Activated CD8-positive, alpha-beta T cell treated with anti-CD3 and anti-CD28 coated beads for 36 hours (primary cell): ENCODE measurements at regions of chr9 and their contacts with region 1.

Region 1: DNA sequence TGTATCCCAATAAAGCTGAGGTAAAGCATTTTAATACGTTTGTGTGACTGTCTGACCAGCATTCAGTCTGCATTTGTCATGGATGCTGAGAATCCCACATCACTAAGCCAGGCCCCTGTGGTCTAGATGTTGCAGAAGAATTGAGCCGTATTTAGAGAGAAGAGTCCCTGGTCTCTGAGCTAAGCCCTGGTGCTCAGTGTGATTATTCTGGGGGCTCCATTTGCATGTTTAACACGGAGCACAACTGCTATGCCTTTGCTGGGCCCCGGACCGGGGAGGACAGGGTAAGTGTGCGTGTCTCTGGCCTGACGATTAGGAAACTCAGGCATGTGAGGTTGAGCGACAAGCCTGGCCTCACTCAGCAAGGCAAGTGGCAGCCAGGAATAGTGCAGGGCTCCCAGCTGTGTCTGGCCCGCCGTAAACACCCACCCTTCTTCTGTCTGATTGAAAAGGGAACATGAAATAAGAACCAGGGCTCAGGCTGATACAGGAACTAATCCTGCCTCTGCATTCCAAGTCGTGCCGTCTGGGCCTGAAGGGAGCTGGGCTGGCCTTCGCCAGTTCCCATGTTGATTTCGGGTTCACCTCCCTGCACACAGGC is 22.3 kb downstream of the FAM78A start:
- DNase-seq: no peak
- ATAC-seq: no peak
- H3K4me3 Mint-ChIP-seq: peak overlapping the region; percentile 30
- H3K27ac Mint-ChIP-seq: peak overlapping the region; percentile 90
- H3K4me1 Mint-ChIP-seq: peaks cover 51% of the 10 kb centered on the region
- H3K27me3 Mint-ChIP-seq: no peaks in the 10 kb centered on the region
- CTCF ChIP-seq: no peak

Region 2: DNA sequence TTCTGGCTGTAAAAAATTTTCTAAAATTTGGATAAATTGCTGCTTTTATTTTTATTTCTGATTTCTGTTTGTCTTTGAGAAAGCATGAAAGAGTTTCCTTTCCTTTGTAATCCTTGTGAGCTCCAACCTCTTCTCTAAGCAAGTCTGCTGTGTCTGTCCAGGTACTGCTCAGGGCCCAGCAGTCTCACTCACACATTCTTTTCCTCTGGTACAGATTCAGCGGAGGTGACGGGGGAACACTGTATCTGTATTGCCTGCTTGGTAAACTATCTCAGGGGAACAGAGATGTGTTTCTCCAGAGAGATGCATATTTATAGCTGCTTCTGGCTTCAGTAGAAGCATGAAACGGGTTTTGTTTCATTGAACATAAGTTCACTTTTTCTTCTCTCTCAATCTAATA is 68.1 kb before region 1 on chr9:
- CTCF ChIA-PET with region 1: no interaction called
- POLR2A ChIA-PET with region 1: no interaction called
- intact Hi-C with region 1: no loop called
- DNase-seq: no peak
- ATAC-seq: no peak
- H3K4me3 Mint-ChIP-seq: no peak overlapping the region
- H3K27ac Mint-ChIP-seq: no peak overlapping the region
- H3K4me1 Mint-ChIP-seq: no peaks in the 10 kb centered on the region
- H3K27me3 Mint-ChIP-seq: no peaks in the 10 kb centered on the region
- CTCF ChIP-seq: no peak

Region 3: DNA sequence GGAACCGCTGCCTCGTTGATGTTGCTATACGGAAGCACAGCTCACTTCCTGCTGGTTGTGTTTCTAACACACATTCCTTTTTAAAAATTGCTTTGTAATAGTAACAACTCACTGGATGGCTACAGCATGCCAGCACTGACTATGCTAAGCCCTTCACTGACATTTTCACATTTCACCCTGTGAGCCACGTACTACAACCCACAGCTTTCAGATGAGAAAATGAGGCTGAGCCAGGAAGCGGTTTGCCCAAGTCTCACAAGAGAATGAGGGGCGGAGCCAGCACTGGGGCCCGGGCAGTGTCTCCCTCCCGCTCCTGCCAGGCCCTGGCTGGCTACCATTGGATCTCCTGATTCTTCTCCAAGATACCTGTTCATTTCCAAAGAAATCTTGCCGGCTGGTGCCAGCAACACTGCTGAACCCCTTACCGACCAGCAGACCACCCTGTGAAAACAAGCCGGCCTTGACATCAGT is 16.0 kb before region 1 on chr9:
- CTCF ChIA-PET with region 1: interaction called, 6 read pairs
- POLR2A ChIA-PET with region 1: interaction called, 74 read pairs
- intact Hi-C with region 1: no loop called
- DNase-seq: peak; percentile 96
- ATAC-seq: peak; percentile 95
- H3K4me3 Mint-ChIP-seq: peak overlapping the region; percentile 73
- H3K27ac Mint-ChIP-seq: peak overlapping the region; percentile 98
- H3K4me1 Mint-ChIP-seq: peaks cover 39% of the 10 kb centered on the region
- H3K27me3 Mint-ChIP-seq: no peaks in the 10 kb centered on the region
- CTCF ChIP-seq: no peak

Region 4: DNA sequence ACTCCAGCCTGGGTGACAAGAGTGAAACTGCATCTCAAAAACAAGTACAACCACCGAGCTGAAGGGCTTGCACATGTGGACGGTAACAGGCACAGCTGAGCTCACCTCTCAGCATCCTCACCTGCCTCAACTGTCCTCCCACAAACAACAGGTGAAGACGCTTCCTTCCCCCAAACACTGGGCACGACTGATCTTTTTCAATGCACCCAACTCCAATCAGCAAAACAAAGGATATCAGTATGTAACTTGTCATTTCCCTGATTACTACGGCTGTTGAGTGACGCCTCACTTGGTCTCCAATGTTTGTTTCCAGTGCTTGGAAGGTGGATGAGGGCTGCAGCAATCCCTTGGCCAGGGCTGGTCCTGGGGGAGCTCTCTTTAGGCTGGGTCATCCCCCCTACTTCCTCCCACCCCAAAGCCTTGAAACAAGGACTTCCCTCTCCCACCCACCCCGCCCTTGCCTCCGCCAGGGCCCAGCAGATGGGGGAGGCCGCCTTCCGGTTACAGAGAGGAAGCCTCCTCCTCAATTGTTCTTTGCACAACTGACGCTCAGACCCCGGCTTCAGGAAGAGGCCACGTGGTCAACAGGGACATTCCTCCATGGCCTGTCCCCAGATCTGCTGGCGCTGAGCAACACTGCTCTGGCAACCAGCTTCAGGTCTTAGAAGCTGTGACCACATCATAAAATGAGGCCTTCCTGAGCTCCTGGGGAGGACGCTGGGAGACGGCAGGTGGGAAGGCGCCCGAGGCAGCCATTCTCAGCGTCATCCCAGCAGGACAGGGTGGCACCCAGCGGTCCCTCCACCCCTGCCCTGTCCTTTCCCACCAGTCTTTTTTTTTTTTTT is 16.4 kb after region 1 on chr9:
- CTCF ChIA-PET with region 1: interaction called, 29 read pairs
- POLR2A ChIA-PET with region 1: interaction called, 310 read pairs
- intact Hi-C with region 1: no loop called
- DNase-seq: peak; percentile 77
- ATAC-seq: peak; percentile 18
- H3K4me3 Mint-ChIP-seq: peak overlapping the region; percentile 90
- H3K27ac Mint-ChIP-seq: peak overlapping the region; percentile 99
- H3K4me1 Mint-ChIP-seq: peaks cover 44% of the 10 kb centered on the region
- H3K27me3 Mint-ChIP-seq: no peaks in the 10 kb centered on the region
- CTCF ChIP-seq: no peak

Region 5: DNA sequence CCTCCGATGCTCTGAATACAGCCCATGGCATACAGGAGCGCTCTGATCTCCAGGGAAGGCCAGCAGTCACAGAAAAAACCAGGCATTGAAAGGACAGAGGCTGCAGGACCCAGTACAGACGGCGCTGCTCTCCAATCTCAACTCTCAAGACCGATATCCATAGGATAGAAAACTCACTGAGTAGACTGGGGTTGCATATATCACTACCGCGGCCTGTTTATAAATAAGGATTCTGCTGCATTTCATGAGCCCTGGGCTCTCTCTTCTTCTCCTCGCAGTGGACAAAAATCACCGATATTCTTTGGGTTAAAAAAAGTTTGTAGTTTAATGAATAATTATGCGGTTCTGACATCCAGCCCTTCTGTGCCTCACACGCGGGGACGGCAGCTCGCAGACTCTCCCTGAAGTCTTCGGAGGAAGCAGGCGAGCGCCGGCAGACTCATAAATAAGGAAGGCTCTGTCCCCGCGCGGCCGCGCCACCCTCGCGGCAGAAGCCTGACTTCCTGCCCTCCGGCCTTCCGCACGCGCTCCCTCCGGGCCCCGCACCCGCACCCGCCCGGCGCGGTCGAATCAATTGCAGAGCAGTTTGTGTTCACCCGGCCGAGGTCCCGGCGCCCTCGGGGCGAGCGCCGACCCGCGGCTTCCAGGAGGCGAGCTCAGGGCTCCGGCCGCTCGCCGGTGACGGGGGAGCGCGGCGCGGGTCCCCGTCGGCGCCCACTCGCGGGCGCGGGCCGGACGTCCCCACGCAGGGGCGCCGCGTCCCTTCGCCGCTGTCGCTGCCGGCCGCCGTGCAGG is 22.3 kb after region 1 on chr9 and contains the start of gene FAM78A:
- CTCF ChIA-PET with region 1: interaction called, 29 read pairs
- POLR2A ChIA-PET with region 1: interaction called, 310 read pairs
- intact Hi-C with region 1: no loop called
- DNase-seq: peak; percentile 65
- ATAC-seq: no peak
- H3K4me3 Mint-ChIP-seq: peak within 1 kb of the TSS; percentile 90
- H3K27ac Mint-ChIP-seq: peak within 1 kb of the TSS; percentile 99
- H3K4me1 Mint-ChIP-seq: peaks cover 24% of the 10 kb centered on the region
- H3K27me3 Mint-ChIP-seq: no peaks in the 10 kb centered on the region
- CTCF ChIP-seq: no peak
- total RNA-seq, gene FAM78A: 36.2 to 39.8 TPM